IMR-90 (cell line): ENCODE measurements at regions of chr12 and their contacts with region 1.

Region 1: GRCh38 chr12:31589904-31590641 is 863 bp downstream of the DENND5B start:
- DNase-seq: peak; percentile 58
- ATAC-seq: peak; percentile 54
- H3K4me3 ChIP-seq: peak overlapping the region; percentile 73
- H3K27ac ChIP-seq: peak overlapping the region; percentile 79
- H3K4me1 ChIP-seq: peaks cover 7% of the 10 kb centered on the region
- H3K27me3 ChIP-seq: no peaks in the 10 kb centered on the region
- CTCF ChIP-seq: no peak
- POLR2A ChIP-seq: peak; percentile 63; the same call in 1 of the 2 replicates
- RAD21 ChIP-seq: no peak

Region 2: GRCh38 chr12:30795410-30796312 is 794.4 kb before region 1 on chr12:
- CTCF ChIA-PET with region 1: no interaction called
- POLR2A ChIA-PET with region 1: no interaction called
- dilution Hi-C with region 1: no loop called
- in situ Hi-C with region 1: no loop called
- intact Hi-C with region 1: no loop called
- DNase-seq: peak; percentile 80
- ATAC-seq: peak; percentile 78
- H3K4me3 ChIP-seq: peak overlapping the region; percentile 61
- H3K27ac ChIP-seq: peak overlapping the region; percentile 93
- H3K4me1 ChIP-seq: peaks cover 17% of the 10 kb centered on the region
- H3K27me3 ChIP-seq: no peaks in the 10 kb centered on the region
- CTCF ChIP-seq: 0 out of 2 replicates have a peak, but pooled peaks have one; percentile 6
- POLR2A ChIP-seq: peak; percentile 86
- RAD21 ChIP-seq: no peak

Region 3: GRCh38 chr12:31406345-31406744 is 183.7 kb before region 1 on chr12:
- CTCF ChIA-PET with region 1: interaction called, 3 read pairs
- POLR2A ChIA-PET with region 1: no interaction called
- dilution Hi-C with region 1: no loop called
- in situ Hi-C with region 1: no loop called
- intact Hi-C with region 1: loop called (anchors 1 kb)
- DNase-seq: peak; percentile 11
- ATAC-seq: no peak
- H3K4me3 ChIP-seq: no peak overlapping the region
- H3K27ac ChIP-seq: no peak overlapping the region
- H3K4me1 ChIP-seq: no peaks in the 10 kb centered on the region
- H3K27me3 ChIP-seq: no peaks in the 10 kb centered on the region
- CTCF ChIP-seq: no peak
- POLR2A ChIP-seq: no peak
- RAD21 ChIP-seq: no peak

Region 4: GRCh38 chr12:31431721-31432240 is 158.3 kb before region 1 on chr12:
- CTCF ChIA-PET with region 1: no interaction called
- POLR2A ChIA-PET with region 1: no interaction called
- dilution Hi-C with region 1: no loop called
- in situ Hi-C with region 1: loop called (anchors 25 kb)
- intact Hi-C with region 1: no loop called
- DNase-seq: peak; percentile 71
- ATAC-seq: peak; percentile 37
- H3K4me3 ChIP-seq: no peak overlapping the region
- H3K27ac ChIP-seq: no peak overlapping the region
- H3K4me1 ChIP-seq: peaks cover 2% of the 10 kb centered on the region; the same call in 1 of the 2 replicates
- H3K27me3 ChIP-seq: no peaks in the 10 kb centered on the region
- CTCF ChIP-seq: no peak
- POLR2A ChIP-seq: no peak
- RAD21 ChIP-seq: no peak

Region 5: GRCh38 chr12:31518680-31519227 is 71.3 kb before region 1 on chr12:
- CTCF ChIA-PET with region 1: interaction called, 3 read pairs
- POLR2A ChIA-PET with region 1: no interaction called
- dilution Hi-C with region 1: no loop called
- in situ Hi-C with region 1: no loop called
- intact Hi-C with region 1: loop called (anchors 2 kb)
- DNase-seq: peak; percentile 100
- ATAC-seq: peak; percentile 88
- H3K4me3 ChIP-seq: no peak overlapping the region
- H3K27ac ChIP-seq: peak overlapping the region; percentile 94; the same call in 1 of the 2 replicates
- H3K4me1 ChIP-seq: peaks cover 23% of the 10 kb centered on the region
- H3K27me3 ChIP-seq: no peaks in the 10 kb centered on the region
- CTCF ChIP-seq: no peak
- POLR2A ChIP-seq: peak; percentile 70
- RAD21 ChIP-seq: no peak; the same call in none of the 2 replicates

Region 6: GRCh38 chr12:31536672-31537071 is 53.4 kb before region 1 on chr12:
- CTCF ChIA-PET with region 1: no interaction called
- POLR2A ChIA-PET with region 1: no interaction called
- dilution Hi-C with region 1: no loop called
- in situ Hi-C with region 1: loop called (anchors 10 kb)
- intact Hi-C with region 1: no loop called
- DNase-seq: peak; percentile 38
- ATAC-seq: peak; percentile 46; the same call in 1 of the 2 replicates
- H3K4me3 ChIP-seq: no peak overlapping the region
- H3K27ac ChIP-seq: no peak overlapping the region
- H3K4me1 ChIP-seq: peaks cover 3% of the 10 kb centered on the region
- H3K27me3 ChIP-seq: no peaks in the 10 kb centered on the region
- CTCF ChIP-seq: no peak
- POLR2A ChIP-seq: no peak
- RAD21 ChIP-seq: no peak